Activated CD4-positive, alpha-beta T cell treated with anti-CD3 and anti-CD28 coated beads, Interleukin-2, amount 10 ng/mL, durations not matched to agents 7 days and 5 days (primary cell): ENCODE measurements at regions of chr9 and their contacts with region 1.

Region 1: GRCh38 chr9:77456829-77457437 is 191.2 kb downstream of the GNA14 start:
- DNase-seq: peak; percentile 85
- H3K4me3 Mint-ChIP-seq: no peak overlapping the region
- H3K27ac Mint-ChIP-seq: no peak overlapping the region
- H3K4me1 Mint-ChIP-seq: peaks cover 21% of the 10 kb centered on the region
- H3K27me3 Mint-ChIP-seq: no peaks in the 10 kb centered on the region

Region 2: GRCh38 chr9:77442200-77442832 is 14.6 kb before region 1 on chr9:
- CTCF ChIA-PET with region 1: interaction called, 38 read pairs
- POLR2A ChIA-PET with region 1: no interaction called
- DNase-seq: no peak
- H3K4me3 Mint-ChIP-seq: no peak overlapping the region
- H3K27ac Mint-ChIP-seq: no peak overlapping the region
- H3K4me1 Mint-ChIP-seq: no peaks in the 10 kb centered on the region
- H3K27me3 Mint-ChIP-seq: no peaks in the 10 kb centered on the region

Region 3: GRCh38 chr9:77469515-77470231 is 12.7 kb after region 1 on chr9:
- CTCF ChIA-PET with region 1: interaction called, 16 read pairs
- POLR2A ChIA-PET with region 1: no interaction called
- DNase-seq: no peak
- H3K4me3 Mint-ChIP-seq: no peak overlapping the region
- H3K27ac Mint-ChIP-seq: no peak overlapping the region
- H3K4me1 Mint-ChIP-seq: peaks cover 11% of the 10 kb centered on the region
- H3K27me3 Mint-ChIP-seq: peaks cover 2% of the 10 kb centered on the region

Region 4: DNA sequence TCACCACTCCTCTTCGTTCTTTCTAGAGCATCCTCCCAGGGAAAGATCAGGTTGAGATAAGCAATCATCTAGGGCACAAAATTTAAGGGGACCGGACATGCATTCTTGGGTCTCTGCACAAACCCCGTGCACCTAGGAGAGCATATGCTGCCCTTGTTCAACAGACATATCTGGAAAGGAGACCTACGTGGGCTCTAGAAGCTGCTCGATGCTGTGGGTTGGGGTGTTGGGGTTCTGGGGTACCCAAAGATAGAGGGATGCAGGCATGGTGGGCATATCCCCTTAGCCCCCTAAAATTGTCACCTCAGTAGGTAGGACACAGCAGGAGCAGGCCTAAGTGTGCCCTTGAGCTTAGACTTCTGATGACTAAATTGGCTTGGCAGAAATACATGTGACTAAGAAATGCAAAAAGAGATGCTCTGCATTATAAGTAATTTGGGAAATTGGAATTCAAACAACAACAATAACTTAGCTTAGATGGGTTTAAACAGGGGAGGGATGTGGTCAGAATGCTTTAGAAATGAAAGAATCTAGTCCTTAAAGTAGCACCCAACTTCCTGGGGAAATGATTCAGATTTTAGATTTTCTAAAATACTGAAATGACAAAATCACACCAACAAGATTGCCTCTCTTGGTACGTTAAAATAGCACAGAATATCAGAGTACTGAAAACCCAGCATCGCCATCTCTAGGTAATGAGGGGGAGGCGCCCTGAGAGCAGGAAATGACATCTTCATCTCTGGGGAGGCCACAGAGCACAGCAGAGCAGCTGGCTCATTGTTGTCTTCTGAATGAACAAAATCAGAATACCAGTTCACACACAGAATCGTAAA is 18.9 kb after region 1 on chr9:
- CTCF ChIA-PET with region 1: interaction called, 17 read pairs
- POLR2A ChIA-PET with region 1: no interaction called
- DNase-seq: peak; percentile 67
- H3K4me3 Mint-ChIP-seq: peak overlapping the region; percentile 5
- H3K27ac Mint-ChIP-seq: peak overlapping the region; percentile 94
- H3K4me1 Mint-ChIP-seq: peaks cover 38% of the 10 kb centered on the region
- H3K27me3 Mint-ChIP-seq: no peaks in the 10 kb centered on the region

Region 5: GRCh38 chr9:77488439-77489126 is 31.6 kb after region 1 on chr9:
- CTCF ChIA-PET with region 1: interaction called, 14 read pairs
- POLR2A ChIA-PET with region 1: no interaction called
- DNase-seq: peak; percentile 18
- H3K4me3 Mint-ChIP-seq: no peak overlapping the region
- H3K27ac Mint-ChIP-seq: no peak overlapping the region
- H3K4me1 Mint-ChIP-seq: peaks cover 17% of the 10 kb centered on the region
- H3K27me3 Mint-ChIP-seq: peaks cover 4% of the 10 kb centered on the region

Region 6: DNA sequence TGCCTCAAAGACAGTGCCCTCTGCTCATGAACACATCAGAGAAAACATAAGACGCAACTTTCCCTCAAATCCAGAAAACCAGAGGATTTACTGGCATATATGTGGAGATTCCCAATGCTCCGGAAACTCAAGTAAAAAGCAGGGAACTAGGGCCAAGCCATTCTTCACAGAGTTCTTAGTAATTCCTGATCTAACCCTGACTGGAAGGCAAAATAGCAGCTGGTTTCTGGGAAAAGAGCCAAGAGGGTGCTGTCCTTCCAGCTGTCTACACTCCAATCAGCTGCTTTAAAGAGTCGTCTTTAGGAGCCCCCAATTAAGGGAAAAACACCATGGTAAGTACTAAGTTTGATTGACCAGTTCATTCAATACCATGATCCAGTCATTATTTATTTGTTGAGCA is 141.6 kb after region 1 on chr9:
- CTCF ChIA-PET with region 1: no interaction called
- POLR2A ChIA-PET with region 1: no interaction called
- DNase-seq: no peak
- H3K4me3 Mint-ChIP-seq: no peak overlapping the region
- H3K27ac Mint-ChIP-seq: no peak overlapping the region
- H3K4me1 Mint-ChIP-seq: peaks cover 11% of the 10 kb centered on the region
- H3K27me3 Mint-ChIP-seq: no peaks in the 10 kb centered on the region